Transverse colon (tissue), 4 donors: ENCODE measurements at regions of chr3 and their contacts with region 1.

Region 1: GRCh38 chr3:48157950-48158376 is 30.3 kb downstream of the CDC25A start:
- DNase-seq: peak; percentile 51
- H3K4me3 ChIP-seq: no peak overlapping the region
- H3K27ac ChIP-seq: no peak overlapping the region
- H3K4me1 ChIP-seq: no peaks in the 10 kb centered on the region
- H3K27me3 ChIP-seq: no peaks in the 10 kb centered on the region
- CTCF ChIP-seq: peak; percentile 35 to 66 (median 60)
- EP300 ChIP-seq: no peak
- POLR2A ChIP-seq: no peak

Region 2: DNA sequence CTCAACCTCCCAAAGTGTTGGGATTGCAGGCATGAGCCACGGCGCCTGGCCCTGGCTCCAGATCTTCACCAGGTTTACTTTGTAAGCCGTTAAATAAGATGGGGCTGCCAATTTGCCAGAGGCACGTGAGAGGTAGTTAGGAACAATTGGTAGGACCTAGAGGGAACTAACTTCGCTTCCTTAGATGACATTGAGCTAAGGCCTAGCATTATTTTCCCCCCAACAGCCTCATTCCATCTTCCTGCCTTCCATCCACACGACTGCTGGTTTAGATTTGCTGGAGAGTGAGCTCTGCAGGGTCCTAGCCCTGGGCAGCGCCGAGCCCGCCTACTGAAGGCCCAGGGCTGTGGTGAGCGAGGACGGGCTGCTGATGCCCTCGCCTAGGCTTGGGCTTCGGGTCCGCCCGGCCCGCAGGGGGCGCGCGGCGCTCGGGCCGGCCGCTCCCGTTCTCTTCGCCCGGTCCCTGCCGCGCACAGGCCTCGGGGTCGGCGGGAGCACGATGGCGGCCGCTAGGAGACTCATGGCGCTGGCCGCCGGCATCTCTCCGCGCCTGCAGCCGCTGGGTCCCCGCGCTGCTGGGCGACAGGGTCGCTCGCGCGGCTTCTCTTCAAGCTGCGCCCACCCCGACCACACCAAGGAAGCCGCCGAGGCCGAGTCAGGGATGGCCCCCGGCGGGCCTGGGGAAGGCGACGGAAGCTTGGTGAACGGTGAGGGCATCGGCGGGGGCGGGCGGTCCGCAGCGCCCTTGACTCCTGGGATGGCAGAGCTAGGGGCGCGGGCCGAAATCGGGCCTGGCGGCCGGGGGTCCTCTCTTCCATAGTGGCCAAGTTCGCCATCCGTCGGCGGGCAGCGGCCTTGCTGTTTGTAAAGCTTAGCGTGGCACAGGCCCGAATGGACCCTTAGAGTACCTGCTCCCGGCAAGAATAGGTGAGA is 333.2 kb before region 1 on chr3:
- in situ Hi-C with region 1: loop called in 3 of 4 experiments (anchors 10 to 25 kb)
- intact Hi-C with region 1: loop called (anchors 5 kb)
- DNase-seq: peak; percentile 82
- H3K4me3 ChIP-seq: peak overlapping the region; percentile 90 to 99 (median 96)
- H3K27ac ChIP-seq: peak overlapping the region; percentile 85 to 89 (median 88)
- H3K4me1 ChIP-seq: peaks cover 8 to 20% (median 20%) of the 10 kb centered on the region in 4 donors
- H3K27me3 ChIP-seq: no peaks in the 10 kb centered on the region
- CTCF ChIP-seq: peak; percentile 31 to 87 (median 73)
- EP300 ChIP-seq: no peak
- POLR2A ChIP-seq: peak; percentile 26

Region 3: GRCh38 chr3:48408823-48409281 is 250.9 kb after region 1 on chr3:
- in situ Hi-C with region 1: no loop called
- intact Hi-C with region 1: no loop called
- DNase-seq: no peak
- H3K4me3 ChIP-seq: no peak overlapping the region
- H3K27ac ChIP-seq: no peak overlapping the region
- H3K4me1 ChIP-seq: no peaks in the 10 kb centered on the region
- H3K27me3 ChIP-seq: no peaks in the 10 kb centered on the region
- CTCF ChIP-seq: no peak
- EP300 ChIP-seq: no peak
- POLR2A ChIP-seq: no peak